CD8-positive, alpha-beta T cell (primary cell): ENCODE measurements at regions of chr15 and their contacts with region 1.

Region 1: DNA sequence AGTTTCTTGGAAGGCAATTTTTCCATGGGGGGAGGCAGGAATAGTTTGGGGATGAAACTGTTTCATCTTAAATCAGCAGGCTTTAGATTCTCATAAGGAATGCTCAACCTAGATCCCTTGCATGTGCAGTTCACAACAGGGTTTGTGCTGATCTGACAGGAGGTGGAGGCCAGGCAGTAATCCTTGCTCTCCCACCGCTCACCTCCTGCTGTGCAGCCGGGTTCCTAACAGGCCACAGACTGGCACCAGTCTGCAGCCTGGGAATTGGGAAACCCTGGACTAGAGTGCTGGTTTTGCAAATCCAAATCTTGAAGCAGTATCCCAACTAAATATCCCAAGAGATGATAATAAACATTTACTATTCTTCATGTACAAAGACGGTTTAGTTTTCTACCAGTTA is 256.3 kb upstream of the TMCO5A start:
- DNase-seq: no peak
- ATAC-seq: no peak
- H3K4me3 ChIP-seq: no peak overlapping the region
- H3K4me3 Mint-ChIP-seq: no peak overlapping the region
- H3K27ac ChIP-seq: no peak overlapping the region
- H3K27ac Mint-ChIP-seq: no peak overlapping the region
- H3K4me1 ChIP-seq: no peaks in the 10 kb centered on the region
- H3K4me1 Mint-ChIP-seq: no peaks in the 10 kb centered on the region
- H3K27me3 ChIP-seq: no peaks in the 10 kb centered on the region
- H3K27me3 Mint-ChIP-seq: no peaks in the 10 kb centered on the region
- CTCF ChIP-seq: no peak

Region 2: DNA sequence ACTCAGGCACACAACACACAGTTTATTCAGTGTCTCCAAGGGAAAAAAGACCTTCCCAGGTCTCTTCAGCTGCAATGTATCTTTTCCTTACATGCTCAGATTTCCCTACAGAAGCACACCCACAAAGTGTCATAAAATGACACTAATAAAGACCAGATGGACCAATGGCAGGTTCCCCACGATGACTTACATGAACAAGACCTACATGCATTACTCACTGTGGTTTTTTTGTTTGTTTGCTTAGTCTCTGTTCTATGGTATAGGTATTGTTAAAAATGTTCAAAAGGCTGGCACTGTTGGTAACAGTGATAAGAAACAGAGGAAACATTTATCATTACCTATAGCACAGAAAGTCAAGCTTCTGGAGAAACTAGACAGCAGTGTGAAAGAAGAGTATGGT is 61.9 kb before region 1 on chr15:
- CTCF ChIA-PET with region 1: no interaction called
- POLR2A ChIA-PET with region 1: no interaction called
- intact Hi-C with region 1: loop called in 1 of 2 experiments (anchors 10 kb)
- DNase-seq: no peak
- ATAC-seq: no peak
- H3K4me3 ChIP-seq: no peak overlapping the region
- H3K4me3 Mint-ChIP-seq: no peak overlapping the region
- H3K27ac ChIP-seq: no peak overlapping the region
- H3K27ac Mint-ChIP-seq: no peak overlapping the region
- H3K4me1 ChIP-seq: no peaks in the 10 kb centered on the region
- H3K4me1 Mint-ChIP-seq: no peaks in the 10 kb centered on the region
- H3K27me3 ChIP-seq: no peaks in the 10 kb centered on the region
- H3K27me3 Mint-ChIP-seq: no peaks in the 10 kb centered on the region
- CTCF ChIP-seq: no peak